Cardiac septum (tissue), 1 donor: ENCODE measurements at regions of chr4 and their contacts with region 1.

Region 1: DNA sequence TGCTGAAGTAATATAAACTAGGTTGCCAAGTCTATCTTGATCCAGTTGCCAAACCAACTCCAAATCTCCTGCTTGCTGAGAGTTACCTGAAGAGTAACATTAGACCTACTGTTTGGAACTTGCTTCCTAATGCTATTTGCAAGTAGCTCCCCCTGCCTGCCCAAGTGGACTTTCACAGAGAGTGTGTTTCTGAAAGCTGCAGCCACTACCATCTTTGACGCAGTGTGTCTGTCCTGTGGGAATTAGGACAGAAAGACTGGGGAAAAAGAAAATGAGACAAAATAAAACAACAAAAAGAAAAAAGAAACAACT is 195.0 kb upstream of the HS3ST1 start:
- DNase-seq: no peak

Region 2: DNA sequence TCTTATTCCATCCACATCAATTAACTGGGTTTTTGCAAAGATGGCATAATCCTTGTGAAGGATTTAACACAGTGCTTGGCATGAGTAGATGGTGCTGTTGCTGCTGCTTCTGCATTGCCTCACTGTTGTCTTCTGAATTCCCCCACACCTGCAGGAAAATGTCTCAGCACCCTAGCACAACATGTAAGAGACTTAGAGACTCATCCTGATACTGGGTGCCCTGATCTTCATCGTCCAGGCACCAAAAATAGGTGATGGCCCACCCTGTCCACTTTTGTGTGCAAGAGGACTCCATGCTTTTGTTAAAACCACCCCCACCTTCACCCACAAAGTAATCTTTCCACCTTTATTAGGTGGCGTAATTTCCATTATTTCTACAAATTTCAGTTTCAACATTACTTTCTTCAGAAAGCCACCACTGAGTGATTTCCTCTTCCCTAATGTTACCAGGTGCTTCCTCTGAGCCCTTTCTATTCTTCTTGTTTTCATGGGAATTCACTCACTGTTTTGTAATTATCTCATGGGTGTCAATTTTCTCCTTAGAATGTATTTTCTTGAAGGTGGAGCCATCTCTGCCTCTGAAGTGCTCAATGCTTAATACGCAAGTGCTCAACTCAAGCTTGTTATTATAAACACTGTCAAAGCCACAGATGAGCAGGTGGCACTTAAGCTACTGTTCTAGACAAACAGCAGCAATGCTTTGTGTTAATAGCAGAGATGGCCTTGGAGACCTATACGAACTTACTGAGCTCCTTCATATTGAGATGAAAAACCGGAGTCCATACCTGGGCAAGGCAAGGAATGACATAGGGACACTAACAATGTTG is 284.5 kb before region 1 on chr4:
- intact Hi-C with region 1: no loop called
- DNase-seq: no peak

Region 3: DNA sequence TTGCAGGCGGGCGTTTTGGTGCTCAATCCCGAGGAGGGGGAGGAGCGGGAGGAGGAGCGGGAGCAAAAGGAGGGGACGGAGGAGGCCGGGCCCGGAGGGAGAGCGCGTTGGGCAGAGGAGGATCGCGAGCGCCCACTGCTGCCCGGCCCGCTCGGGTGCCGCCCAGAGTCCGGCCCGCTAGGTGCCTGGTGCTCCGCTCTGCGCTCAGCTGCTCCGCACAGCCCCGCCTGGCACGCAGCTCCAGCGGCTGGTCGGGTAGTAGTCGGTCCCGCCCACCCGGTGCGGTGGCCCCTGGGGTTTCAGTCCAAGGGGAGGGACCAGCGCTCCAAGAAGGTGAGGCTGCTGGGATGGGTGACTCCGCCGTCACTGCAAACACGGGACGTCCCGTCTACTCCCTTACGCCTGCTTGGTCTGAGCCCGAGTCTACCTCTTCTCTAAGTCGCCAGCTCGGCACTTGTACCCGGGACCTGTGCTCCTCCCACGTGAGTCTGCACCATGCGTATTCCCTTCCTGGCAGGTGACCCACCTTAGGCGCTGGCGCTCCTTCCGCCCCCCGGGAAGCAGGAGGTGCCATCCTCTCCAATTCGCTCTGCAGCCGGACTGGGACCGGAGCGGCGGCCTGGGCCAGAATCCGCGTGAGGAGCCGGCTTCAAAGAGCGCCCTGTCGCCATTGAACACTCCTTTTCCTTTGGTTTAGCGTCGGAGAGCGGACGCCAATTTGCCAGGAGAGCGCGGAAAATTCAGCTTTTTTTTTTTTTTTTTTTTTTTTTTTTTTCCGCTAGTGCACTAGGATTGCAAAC is 194.6 kb before region 1 on chr4:
- intact Hi-C with region 1: loop called (anchors 5 kb)
- DNase-seq: peak; percentile 85

Region 4: GRCh38 chr4:11505221-11505971 is 118.3 kb before region 1 on chr4:
- intact Hi-C with region 1: loop called (anchors 5 kb)
- DNase-seq: no peak

Region 5: GRCh38 chr4:11698846-11699590 is 75.3 kb after region 1 on chr4:
- intact Hi-C with region 1: loop called (anchors 5 kb)
- DNase-seq: no peak

Region 6: DNA sequence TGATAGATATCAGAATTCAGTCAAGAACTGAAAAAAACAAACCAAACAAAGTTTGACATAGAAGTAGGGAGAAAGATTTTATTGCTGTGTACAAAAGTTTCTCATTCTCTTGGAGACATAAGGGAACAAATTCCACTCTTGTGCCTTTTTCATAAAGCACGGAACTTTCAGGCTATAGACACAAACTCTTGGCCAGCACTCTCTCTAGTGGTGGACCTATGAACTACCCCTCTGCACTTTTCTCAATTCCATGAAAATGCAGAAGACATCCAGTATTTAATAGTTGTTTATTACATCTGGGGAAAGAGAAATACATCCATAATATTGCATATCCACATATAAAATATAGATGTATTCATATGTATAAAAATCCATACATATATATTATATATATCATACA is 96.6 kb after region 1 on chr4:
- intact Hi-C with region 1: loop called (anchors 5 kb)
- DNase-seq: no peak

Region 7: GRCh38 chr4:11904117-11904535 is 280.4 kb after region 1 on chr4:
- intact Hi-C with region 1: loop called (anchors 2 kb)
- DNase-seq: no peak